H1 (cell line): ENCODE measurements at regions of chr19 and their contacts with region 1.

Region 1: GRCh38 chr19:5170329-5170745 is 170.3 kb downstream of the PTPRS start:
- DNase-seq: peak in 1 of 2 experiments; percentile 95
- H3K4me3 ChIP-seq: no peak overlapping the region
- H3K27ac ChIP-seq: no peak overlapping the region
- H3K4me1 ChIP-seq: no peaks in the 10 kb centered on the region
- H3K27me3 ChIP-seq: peaks cover 0 to 2% (median 0%) of the 10 kb centered on the region in 4 experiments; a peak in 1 of 7 replicates
- CTCF ChIP-seq: peak; percentile 60 to 95 (median 94)
- EP300 ChIP-seq: no peak
- POLR2A ChIP-seq: no peak
- RAD21 ChIP-seq: peak; percentile 47 to 54

Region 2: DNA sequence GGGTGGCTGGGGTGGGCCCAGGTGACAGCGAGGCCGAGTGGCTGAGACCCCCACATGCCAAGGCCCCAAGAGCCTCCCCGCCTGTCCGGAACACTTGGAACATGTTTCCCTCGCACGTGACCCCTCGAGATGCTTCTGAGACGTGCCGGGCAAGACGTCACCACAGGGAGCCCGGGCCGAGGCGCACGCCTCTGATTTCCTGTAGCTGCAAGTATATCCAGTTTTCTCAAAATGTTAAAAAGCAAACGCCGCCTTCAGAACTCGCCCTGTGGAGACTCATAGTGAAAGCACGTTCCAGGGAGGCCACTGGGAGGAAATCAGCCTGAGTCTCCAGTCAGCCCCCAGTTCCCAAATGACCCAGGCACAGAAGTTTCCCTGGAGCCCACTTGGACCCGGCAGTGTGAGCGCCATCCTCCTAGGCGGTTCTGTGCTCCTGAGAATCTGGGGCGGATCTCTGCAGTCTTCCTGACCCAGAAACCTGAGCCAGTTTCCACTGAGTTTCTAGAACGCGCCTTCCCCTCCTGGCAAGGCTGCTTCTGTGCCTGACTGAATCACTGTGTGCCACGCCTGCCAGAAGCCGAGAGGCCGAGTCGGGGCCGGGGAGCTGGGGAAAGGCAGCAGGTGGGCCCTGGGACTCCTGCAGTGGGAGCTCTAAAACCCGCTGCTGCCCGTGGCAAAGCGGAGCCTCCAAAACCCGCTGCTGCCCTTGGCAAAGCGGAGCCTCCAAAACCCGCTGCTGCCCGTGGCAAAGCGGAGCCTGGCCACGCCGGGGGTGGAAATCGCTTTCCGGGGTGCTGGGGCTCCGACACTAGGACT is 22.2 kb before region 1 on chr19:
- CTCF ChIA-PET with region 1: interaction called, 14 read pairs
- POLR2A ChIA-PET with region 1: interaction called, 3 read pairs
- DNase-seq: no peak
- H3K4me3 ChIP-seq: no peak overlapping the region
- H3K27ac ChIP-seq: no peak overlapping the region
- H3K4me1 ChIP-seq: peaks cover 0 to 17% (median 11%) of the 10 kb centered on the region in 4 experiments; a peak in 5 of 7 replicates
- H3K27me3 ChIP-seq: no peaks in the 10 kb centered on the region
- CTCF ChIP-seq: no peak
- EP300 ChIP-seq: no peak
- POLR2A ChIP-seq: no peak
- RAD21 ChIP-seq: no peak

Region 3: GRCh38 chr19:5154129-5154798 is 16.1 kb before region 1 on chr19:
- CTCF ChIA-PET with region 1: interaction called, 14 read pairs
- POLR2A ChIA-PET with region 1: interaction called, 3 read pairs
- DNase-seq: peak in 1 of 2 experiments; percentile 91
- H3K4me3 ChIP-seq: no peak overlapping the region
- H3K27ac ChIP-seq: no peak overlapping the region
- H3K4me1 ChIP-seq: peaks cover 0 to 24% (median 15%) of the 10 kb centered on the region in 4 experiments; a peak in 6 of 7 replicates
- H3K27me3 ChIP-seq: no peaks in the 10 kb centered on the region
- CTCF ChIP-seq: peak; percentile 69 to 93 (median 85)
- EP300 ChIP-seq: no peak
- POLR2A ChIP-seq: no peak
- RAD21 ChIP-seq: peak; percentile 50 to 61

Region 4: DNA sequence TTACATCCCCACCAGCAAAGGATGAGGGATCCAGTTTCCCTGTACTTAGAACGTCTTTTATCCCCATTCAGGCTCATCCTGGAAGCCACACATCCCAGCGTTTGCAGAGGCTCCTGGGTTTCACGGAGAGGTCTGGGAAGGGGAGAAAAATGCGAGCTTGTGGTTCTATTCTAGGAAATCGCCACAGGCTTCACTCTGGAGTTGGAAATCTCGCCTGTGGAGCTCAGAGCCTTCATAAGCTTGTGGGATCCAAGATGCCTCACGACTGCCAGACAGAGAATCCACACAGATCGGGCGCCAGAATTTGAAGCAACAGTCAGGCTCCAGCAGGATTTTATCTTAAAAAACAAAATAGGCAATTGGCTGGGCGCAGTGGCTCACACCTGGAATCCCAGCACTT is 12.4 kb after region 1 on chr19:
- CTCF ChIA-PET with region 1: interaction called, 20 read pairs
- POLR2A ChIA-PET with region 1: no interaction called
- DNase-seq: no peak
- H3K4me3 ChIP-seq: no peak overlapping the region
- H3K27ac ChIP-seq: no peak overlapping the region
- H3K4me1 ChIP-seq: no peaks in the 10 kb centered on the region; a peak in 1 of 7 replicates
- H3K27me3 ChIP-seq: no peaks in the 10 kb centered on the region
- CTCF ChIP-seq: no peak
- EP300 ChIP-seq: no peak
- POLR2A ChIP-seq: no peak
- RAD21 ChIP-seq: no peak